ENCODE measurements at regions of chr5 and their contacts with region 1.

Region 1: GRCh38 chr5:142356716-142357473 is 32.1 kb upstream of the SPRY4 start:
- DNase-seq: peak; percentile 88
- H3K4me3 Mint-ChIP-seq: peak overlapping the region; percentile 84
- H3K27ac Mint-ChIP-seq: peak overlapping the region; percentile 92
- H3K4me1 Mint-ChIP-seq: peaks cover 58% of the 10 kb centered on the region
- H3K27me3 Mint-ChIP-seq: no peaks in the 10 kb centered on the region

Region 2: DNA sequence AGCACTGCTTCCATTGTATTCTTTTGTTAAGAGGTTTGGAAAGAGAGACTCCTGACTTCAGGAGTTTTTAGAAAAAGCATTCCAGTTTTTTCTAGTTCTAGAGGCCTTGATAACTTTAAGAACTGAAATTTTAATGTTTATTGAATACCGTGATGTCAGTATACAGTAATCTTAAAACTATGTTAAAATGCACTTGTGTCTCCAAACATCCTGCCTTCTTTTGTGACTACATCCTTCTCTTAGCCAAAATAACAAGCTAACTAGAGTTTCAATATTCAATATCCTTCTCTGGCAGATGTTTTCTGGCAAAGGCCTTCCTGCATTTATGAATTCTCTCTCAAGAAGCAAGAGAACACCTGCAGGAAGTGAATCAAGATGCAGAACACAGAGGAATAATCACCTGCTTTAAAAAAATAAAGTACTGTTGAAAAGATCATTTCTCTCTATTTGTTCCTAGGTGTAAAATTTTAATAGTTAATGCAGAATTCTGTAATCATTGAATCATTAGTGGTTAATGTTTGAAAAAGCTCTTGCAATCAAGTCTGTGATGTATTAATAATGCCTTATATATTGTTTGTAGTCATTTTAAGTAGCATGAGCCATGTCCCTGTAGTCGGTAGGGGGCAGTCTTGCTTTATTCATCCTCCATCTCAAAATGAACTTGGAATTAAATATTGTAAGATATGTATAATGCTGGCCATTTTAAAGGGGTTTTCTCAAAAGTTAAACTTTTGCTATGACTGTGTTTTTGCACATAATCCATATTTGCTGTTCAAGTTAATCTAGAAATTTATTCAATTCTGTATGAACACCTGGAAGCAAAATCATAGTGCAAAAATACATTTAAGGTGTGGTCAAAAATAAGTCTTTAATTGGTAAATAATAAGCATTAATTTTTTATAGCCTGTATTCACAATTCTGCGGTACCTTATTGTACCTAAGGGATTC is 205.2 kb before region 1 on chr5:
- intact Hi-C with region 1: loop called (anchors 10 kb)
- DNase-seq: peak; percentile 29
- H3K4me3 Mint-ChIP-seq: no peak overlapping the region
- H3K27ac Mint-ChIP-seq: no peak overlapping the region
- H3K4me1 Mint-ChIP-seq: peaks cover 14% of the 10 kb centered on the region
- H3K27me3 Mint-ChIP-seq: no peaks in the 10 kb centered on the region

Region 3: GRCh38 chr5:142280066-142280911 is 76.6 kb before region 1 on chr5:
- intact Hi-C with region 1: no loop called
- DNase-seq: no peak
- H3K4me3 Mint-ChIP-seq: no peak overlapping the region
- H3K27ac Mint-ChIP-seq: no peak overlapping the region
- H3K4me1 Mint-ChIP-seq: peaks cover 5% of the 10 kb centered on the region
- H3K27me3 Mint-ChIP-seq: peaks cover 3% of the 10 kb centered on the region

Region 4: GRCh38 chr5:142432369-142432863 is 75.5 kb after region 1 on chr5:
- intact Hi-C with region 1: loop called (anchors 1 kb)
- DNase-seq: peak; percentile 19
- H3K4me3 Mint-ChIP-seq: peak overlapping the region; percentile 66
- H3K27ac Mint-ChIP-seq: peak overlapping the region; percentile 90
- H3K4me1 Mint-ChIP-seq: peaks cover 36% of the 10 kb centered on the region
- H3K27me3 Mint-ChIP-seq: no peaks in the 10 kb centered on the region

Region 5: GRCh38 chr5:142507531-142508372 is 150.9 kb after region 1 on chr5:
- intact Hi-C with region 1: loop called (anchors 2 kb)
- DNase-seq: no peak
- H3K4me3 Mint-ChIP-seq: no peak overlapping the region
- H3K27ac Mint-ChIP-seq: peak overlapping the region; percentile 57
- H3K4me1 Mint-ChIP-seq: peaks cover 41% of the 10 kb centered on the region
- H3K27me3 Mint-ChIP-seq: no peaks in the 10 kb centered on the region

Measured in activated T-helper 1 cell treated with anti-CD3 and anti-CD28 coated beads, Interleukin-12 subunit alpha, Interleukin-12 subunit beta, Interleukin-2, Interleukin-4 antibody, amounts not matched to agents 30 ng/mL and 10 ng/mL and 1 ng/mL, durations not matched to agents 14 hours and 24 hours and 36 hours (primary cell).